CD8-positive, alpha-beta T cell (primary cell): ENCODE measurements at regions of chr6 and their contacts with region 1.

Region 1: DNA sequence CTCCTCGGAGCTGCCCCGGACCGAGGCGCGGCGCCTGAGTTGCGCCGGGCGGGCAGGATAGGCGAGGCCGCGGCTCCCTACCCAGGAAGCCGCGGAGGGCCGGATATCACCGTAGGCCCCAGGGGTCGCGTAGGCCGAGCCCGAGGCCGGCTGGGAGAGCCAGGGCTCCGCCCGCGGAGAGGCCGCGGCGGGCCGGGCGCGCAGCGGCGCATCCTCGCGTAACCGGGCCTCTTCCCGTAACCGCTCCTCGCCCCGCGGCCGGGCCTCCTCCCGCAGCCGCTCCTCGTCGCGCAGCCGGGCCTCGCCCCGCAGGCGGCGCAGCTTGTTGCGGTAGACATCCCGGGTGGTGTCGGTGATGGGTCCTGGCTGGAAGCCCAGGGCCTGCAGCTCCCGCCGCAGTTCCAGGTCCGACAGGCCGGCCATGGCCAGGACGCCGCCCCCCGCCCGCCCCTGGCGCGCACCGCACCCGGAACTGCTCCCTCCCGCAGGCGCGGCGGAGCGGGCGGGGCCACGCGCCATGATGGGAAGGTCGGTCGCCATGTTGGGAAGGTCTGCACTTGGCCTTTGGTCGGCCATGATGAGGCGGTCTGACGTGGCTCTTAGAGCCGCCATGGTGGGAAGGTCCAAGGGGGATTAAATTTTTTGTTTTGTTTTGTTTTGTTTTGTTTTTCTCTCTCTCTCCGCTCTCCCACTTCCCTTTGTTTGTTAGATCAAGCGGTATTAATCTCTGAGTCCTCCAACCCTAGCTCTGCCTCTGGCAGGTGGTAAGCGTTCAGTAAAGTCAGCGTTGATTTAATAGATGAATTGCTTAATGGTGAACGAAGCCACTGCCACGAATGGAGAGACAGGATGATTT is at the start of gene LEMD2:
- DNase-seq: peak; percentile 88 to 95 (median 93)
- ATAC-seq: peak; percentile 91
- H3K4me3 ChIP-seq: peak within 1 kb of the TSS; percentile 55 to 90
- H3K4me3 Mint-ChIP-seq: peak within 1 kb of the TSS; percentile 97
- H3K27ac ChIP-seq: peak within 1 kb of the TSS; percentile 87 to 90
- H3K27ac Mint-ChIP-seq: peak within 1 kb of the TSS; percentile 99
- H3K4me1 ChIP-seq: peaks cover 41% of the 10 kb centered on the region
- H3K4me1 Mint-ChIP-seq: peaks cover 51% of the 10 kb centered on the region
- H3K27me3 ChIP-seq: no peaks in the 10 kb centered on the region
- H3K27me3 Mint-ChIP-seq: peaks cover 5% of the 10 kb centered on the region
- CTCF ChIP-seq: no peak
- total RNA-seq, gene LEMD2: 124 TPM

Region 2: GRCh38 chr6:31971993-31972708 is 1816.8 kb before region 1 on chr6 and contains the start of gene DXO:
- CTCF ChIA-PET with region 1: no interaction called
- POLR2A ChIA-PET with region 1: no interaction called
- intact Hi-C with region 1: loop called in 1 of 2 experiments (anchors 10 kb)
- DNase-seq: peak; percentile 91 to 100 (median 97)
- ATAC-seq: peak; percentile 93
- H3K4me3 ChIP-seq: peak within 1 kb of the TSS; percentile 66 to 90
- H3K4me3 Mint-ChIP-seq: peak within 1 kb of the TSS; percentile 96
- H3K27ac ChIP-seq: peak within 1 kb of the TSS; percentile 98 to 99
- H3K27ac Mint-ChIP-seq: peak within 1 kb of the TSS; percentile 100
- H3K4me1 ChIP-seq: peaks cover 22% of the 10 kb centered on the region
- H3K4me1 Mint-ChIP-seq: peaks cover 37% of the 10 kb centered on the region
- H3K27me3 ChIP-seq: no peaks in the 10 kb centered on the region
- H3K27me3 Mint-ChIP-seq: no peaks in the 10 kb centered on the region
- CTCF ChIP-seq: no peak
- total RNA-seq, gene DXO: 20.8 to 22.2 TPM

Region 3: DNA sequence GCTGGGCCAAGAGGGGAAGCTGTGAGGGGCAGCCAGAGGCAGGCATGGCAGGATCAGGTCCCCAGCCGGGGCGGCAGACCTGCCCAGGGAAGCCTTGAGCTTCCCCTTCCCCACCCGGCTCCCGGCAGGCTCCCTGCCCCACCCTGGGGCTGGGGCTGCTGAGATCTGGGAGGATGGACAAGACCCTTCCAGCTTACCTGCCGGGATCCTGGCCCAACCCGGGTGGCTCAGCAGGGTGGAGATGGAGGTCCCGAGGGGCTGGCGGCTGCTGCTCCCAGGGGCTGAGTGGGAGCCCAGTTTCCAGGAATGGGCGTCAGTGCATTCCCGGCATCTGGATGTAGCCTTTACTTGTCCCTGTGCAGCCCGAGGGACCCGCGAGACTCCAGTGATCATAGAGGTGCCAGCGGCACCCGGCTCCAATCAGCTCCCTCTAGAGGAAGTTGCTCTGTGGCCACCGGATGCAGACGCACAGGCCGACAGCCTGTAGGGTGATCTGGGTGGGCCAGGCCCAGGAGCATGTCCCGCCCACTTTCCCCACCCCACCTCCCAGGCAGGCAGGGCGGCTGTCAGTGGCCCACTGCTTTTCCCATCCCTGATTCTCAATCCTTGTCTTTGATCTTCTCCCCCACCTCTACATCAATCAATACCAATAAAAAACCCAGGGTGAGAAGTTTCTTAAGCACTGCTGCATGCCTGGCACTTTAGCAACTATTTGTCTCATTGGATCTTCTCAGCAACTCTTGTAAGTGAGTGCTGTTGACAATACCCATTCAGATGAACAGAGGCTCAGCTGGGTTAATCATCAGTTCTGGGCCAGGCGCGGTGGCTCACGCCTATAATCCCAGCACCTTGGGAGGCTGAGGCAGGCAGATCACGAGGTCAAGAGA is 208.9 kb before region 1 on chr6 and contains the start of gene BAK1:
- CTCF ChIA-PET with region 1: no interaction called
- POLR2A ChIA-PET with region 1: no interaction called
- intact Hi-C with region 1: loop called in 1 of 2 experiments (anchors 2 kb)
- DNase-seq: peak; percentile 59 to 94 (median 85)
- ATAC-seq: peak; percentile 94
- H3K4me3 ChIP-seq: peak within 1 kb of the TSS; percentile 97 to 98
- H3K4me3 Mint-ChIP-seq: peak within 1 kb of the TSS; percentile 93
- H3K27ac ChIP-seq: peak within 1 kb of the TSS; percentile 85 to 87
- H3K27ac Mint-ChIP-seq: peak within 1 kb of the TSS; percentile 98
- H3K4me1 ChIP-seq: peaks cover 29% of the 10 kb centered on the region
- H3K4me1 Mint-ChIP-seq: peaks cover 31% of the 10 kb centered on the region
- H3K27me3 ChIP-seq: no peaks in the 10 kb centered on the region
- H3K27me3 Mint-ChIP-seq: no peaks in the 10 kb centered on the region
- CTCF ChIP-seq: peak; percentile 44
- total RNA-seq, gene BAK1: 44.8 to 46.5 TPM

Region 4: GRCh38 chr6:33732826-33733708 is 55.9 kb before region 1 on chr6:
- CTCF ChIA-PET with region 1: no interaction called
- POLR2A ChIA-PET with region 1: no interaction called
- intact Hi-C with region 1: no loop called
- DNase-seq: no peak
- ATAC-seq: no peak
- H3K4me3 ChIP-seq: no peak overlapping the region
- H3K4me3 Mint-ChIP-seq: no peak overlapping the region
- H3K27ac ChIP-seq: no peak overlapping the region
- H3K27ac Mint-ChIP-seq: no peak overlapping the region
- H3K4me1 ChIP-seq: no peaks in the 10 kb centered on the region
- H3K4me1 Mint-ChIP-seq: no peaks in the 10 kb centered on the region
- H3K27me3 ChIP-seq: no peaks in the 10 kb centered on the region
- H3K27me3 Mint-ChIP-seq: no peaks in the 10 kb centered on the region
- CTCF ChIP-seq: no peak

Region 5: DNA sequence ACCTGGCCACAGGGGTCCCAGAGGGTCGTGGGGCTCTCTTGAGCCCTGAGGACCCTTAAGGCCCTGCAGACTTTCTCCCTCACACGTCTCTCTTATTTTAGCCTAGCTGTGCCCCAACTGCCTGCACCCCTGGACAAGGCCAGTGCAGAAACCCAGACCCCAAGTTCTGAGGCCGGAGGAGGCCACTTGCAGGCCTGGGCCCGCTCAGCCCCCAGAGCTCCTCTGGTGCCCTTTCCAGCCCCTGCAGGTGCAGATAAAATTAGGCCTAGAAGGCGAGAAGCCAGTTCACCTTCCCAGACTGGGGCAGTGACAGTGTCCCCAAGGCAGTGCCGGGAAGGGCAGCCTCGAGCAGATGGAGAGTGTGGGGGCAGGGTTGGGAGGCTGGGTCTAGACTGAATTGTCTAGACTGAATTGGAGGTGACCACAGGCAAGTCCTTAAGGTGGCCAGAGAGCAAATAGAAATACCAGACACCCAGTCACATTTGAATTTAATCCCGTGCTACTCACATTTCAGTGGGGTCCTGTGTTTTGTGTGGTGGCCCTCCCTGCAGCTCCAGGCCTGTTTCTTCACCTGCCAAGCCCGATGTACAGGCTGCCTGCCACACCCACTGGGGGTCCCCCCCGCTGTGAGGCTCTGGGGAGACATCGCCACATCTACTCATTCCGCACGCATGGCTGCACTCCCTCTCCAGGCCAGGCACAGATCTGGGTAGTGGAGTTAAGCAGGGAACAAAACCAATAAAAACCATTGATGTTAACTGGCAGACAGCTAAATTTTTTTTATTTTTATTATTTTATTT is 33.7 kb before region 1 on chr6:
- CTCF ChIA-PET with region 1: no interaction called
- POLR2A ChIA-PET with region 1: no interaction called
- intact Hi-C with region 1: no loop called
- DNase-seq: no peak
- ATAC-seq: no peak
- H3K4me3 ChIP-seq: no peak overlapping the region
- H3K4me3 Mint-ChIP-seq: no peak overlapping the region
- H3K27ac ChIP-seq: no peak overlapping the region
- H3K27ac Mint-ChIP-seq: no peak overlapping the region
- H3K4me1 ChIP-seq: no peaks in the 10 kb centered on the region
- H3K4me1 Mint-ChIP-seq: no peaks in the 10 kb centered on the region
- H3K27me3 ChIP-seq: no peaks in the 10 kb centered on the region
- H3K27me3 Mint-ChIP-seq: no peaks in the 10 kb centered on the region
- CTCF ChIP-seq: no peak

Region 6: DNA sequence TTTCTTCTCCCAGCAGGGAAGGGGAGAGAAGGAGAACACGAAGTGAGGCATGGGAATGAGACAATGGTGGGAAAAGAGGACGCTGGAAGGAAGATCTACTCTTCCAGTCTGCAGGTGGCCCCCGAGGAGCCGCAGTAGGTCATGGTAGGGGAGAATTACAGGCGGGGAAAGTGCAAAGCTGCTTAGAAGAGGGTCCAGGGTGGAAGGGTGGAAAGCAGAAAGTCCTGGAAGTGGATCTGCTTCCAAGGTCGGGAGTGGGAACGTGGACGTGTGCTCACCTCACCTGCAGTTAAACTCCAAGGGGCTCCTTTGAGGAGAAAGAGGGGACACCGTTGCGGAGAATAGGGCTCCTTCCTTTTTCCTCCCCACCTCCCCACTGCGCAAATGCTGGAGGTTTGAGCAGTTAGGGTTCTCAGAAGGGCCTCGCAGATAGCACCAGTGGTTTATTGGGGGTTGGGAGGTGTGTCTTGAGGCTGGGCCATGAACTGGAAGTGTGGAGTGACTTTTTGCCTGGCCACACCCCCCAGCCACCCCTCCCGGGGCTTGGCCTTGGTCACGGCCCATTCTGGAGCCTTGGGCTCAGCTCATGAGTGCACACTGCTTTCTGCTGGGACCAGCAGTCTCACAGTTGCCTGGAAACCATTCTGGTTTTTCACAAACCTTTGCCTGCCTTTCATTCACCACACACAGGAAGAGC is 115.3 kb after region 1 on chr6:
- CTCF ChIA-PET with region 1: no interaction called
- POLR2A ChIA-PET with region 1: interaction called, 8 read pairs
- intact Hi-C with region 1: loop called (anchors 1 to 2 kb)
- DNase-seq: peak; percentile 42 to 94 (median 78)
- ATAC-seq: peak; percentile 78
- H3K4me3 ChIP-seq: peak overlapping the region; percentile 27 to 39
- H3K4me3 Mint-ChIP-seq: peak overlapping the region; percentile 64
- H3K27ac ChIP-seq: peak overlapping the region; percentile 71 to 76
- H3K27ac Mint-ChIP-seq: peak overlapping the region; percentile 93
- H3K4me1 ChIP-seq: peaks cover 59% of the 10 kb centered on the region
- H3K4me1 Mint-ChIP-seq: peaks cover 83% of the 10 kb centered on the region
- H3K27me3 ChIP-seq: no peaks in the 10 kb centered on the region
- H3K27me3 Mint-ChIP-seq: no peaks in the 10 kb centered on the region
- CTCF ChIP-seq: no peak

Region 7: DNA sequence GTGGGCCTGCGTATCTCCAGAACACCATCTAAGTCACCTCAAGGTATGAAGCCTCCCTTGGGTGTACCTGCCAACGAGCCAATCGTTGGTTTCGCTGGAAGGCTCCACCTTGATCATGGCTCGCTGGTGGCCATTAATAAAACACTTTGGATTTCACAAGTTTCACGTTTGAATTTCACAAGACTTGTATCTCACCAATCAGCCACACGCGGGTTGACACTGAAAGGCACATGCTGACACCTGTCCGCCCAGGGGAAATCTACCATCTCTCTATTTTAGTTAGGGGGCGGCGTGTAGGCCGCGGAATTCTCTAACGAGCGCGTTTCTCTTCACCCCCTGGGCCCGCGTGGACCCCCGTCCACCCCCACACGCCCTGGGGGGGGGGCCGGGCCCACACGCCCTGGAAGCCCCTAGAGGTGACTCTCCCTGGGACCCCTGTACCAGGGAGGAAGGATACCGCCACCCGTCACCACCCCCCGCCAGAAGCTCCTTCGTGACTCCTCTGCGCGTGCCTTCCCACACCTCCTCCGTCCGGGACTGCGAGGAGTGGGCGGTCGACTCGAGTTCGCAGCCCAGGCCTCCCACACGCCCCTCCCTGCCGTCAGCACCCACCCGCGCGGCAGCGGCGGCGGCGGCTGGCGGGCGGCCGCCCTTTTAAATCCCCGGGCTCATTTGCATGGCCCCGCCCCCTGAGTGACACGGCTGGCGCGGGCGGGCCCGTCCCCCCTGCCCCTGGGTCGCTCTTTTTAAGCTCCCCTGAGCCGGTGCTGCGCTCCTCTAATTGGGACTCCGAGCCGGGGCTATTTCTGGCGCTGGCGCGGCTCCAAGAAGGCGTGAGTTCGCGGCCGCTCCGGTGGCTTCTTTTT is 447.4 kb after region 1 on chr6 and contains the start of gene HMGA1:
- CTCF ChIA-PET with region 1: no interaction called
- POLR2A ChIA-PET with region 1: interaction called, 3 read pairs
- intact Hi-C with region 1: loop called (anchors 2 to 5 kb)
- DNase-seq: peak; percentile 75 to 95 (median 90)
- ATAC-seq: peak; percentile 70
- H3K4me3 ChIP-seq: peak within 1 kb of the TSS; percentile 77 to 90
- H3K4me3 Mint-ChIP-seq: peak within 1 kb of the TSS; percentile 90
- H3K27ac ChIP-seq: peak within 1 kb of the TSS; percentile 71 to 95
- H3K27ac Mint-ChIP-seq: peak within 1 kb of the TSS; percentile 99
- H3K4me1 ChIP-seq: peaks cover 22% of the 10 kb centered on the region
- H3K4me1 Mint-ChIP-seq: peaks cover 33% of the 10 kb centered on the region
- H3K27me3 ChIP-seq: no peaks in the 10 kb centered on the region
- H3K27me3 Mint-ChIP-seq: no peaks in the 10 kb centered on the region
- CTCF ChIP-seq: no peak
- total RNA-seq, gene HMGA1: 107 to 113 TPM

Region 8: DNA sequence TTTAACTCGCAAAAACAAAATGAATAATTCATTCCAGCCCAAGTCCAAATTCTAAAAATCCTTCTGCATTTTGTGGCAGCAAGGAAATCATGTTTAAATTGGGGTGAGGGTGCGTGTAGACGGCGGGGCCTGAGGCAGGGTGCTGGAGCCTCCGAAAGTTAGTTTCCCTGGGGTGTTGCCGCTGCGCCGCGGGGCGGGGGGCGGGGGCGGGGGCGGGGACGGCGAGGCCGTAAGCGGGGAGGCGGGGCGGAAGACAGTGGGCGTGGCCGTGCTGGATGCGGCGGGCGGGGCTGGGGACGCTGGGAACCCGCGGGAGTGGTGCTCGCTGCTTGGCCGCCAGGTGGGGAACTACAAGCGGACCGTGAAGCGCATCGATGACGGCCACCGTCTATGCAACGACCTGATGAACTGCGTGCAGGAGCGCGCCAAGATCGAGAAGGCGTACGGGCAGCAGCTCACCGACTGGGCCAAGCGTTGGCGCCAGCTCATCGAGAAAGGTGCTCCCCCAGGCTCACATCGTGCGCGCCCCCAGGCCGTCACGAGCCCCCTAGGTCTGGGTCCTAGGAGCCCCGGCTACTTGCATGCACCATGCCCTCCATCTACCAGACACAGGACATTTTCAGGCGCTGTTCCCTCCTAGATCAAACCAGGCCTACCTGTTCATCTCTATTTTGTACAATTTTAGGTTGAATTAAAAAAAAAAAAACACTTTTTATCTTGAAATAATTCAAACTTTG is 738.2 kb after region 1 on chr6:
- CTCF ChIA-PET with region 1: no interaction called
- POLR2A ChIA-PET with region 1: no interaction called
- intact Hi-C with region 1: loop called in 1 of 2 experiments (anchors 2 kb)
- DNase-seq: peak; percentile 91 to 99 (median 96)
- ATAC-seq: peak; percentile 98
- H3K4me3 ChIP-seq: peak overlapping the region; percentile 17 to 31
- H3K4me3 Mint-ChIP-seq: peak overlapping the region; percentile 58
- H3K27ac ChIP-seq: peak overlapping the region; percentile 31 to 58
- H3K27ac Mint-ChIP-seq: peak overlapping the region; percentile 80
- H3K4me1 ChIP-seq: peaks cover 7% of the 10 kb centered on the region
- H3K4me1 Mint-ChIP-seq: peaks cover 14% of the 10 kb centered on the region
- H3K27me3 ChIP-seq: no peaks in the 10 kb centered on the region
- H3K27me3 Mint-ChIP-seq: no peaks in the 10 kb centered on the region
- CTCF ChIP-seq: peak; percentile 51

Region 9: DNA sequence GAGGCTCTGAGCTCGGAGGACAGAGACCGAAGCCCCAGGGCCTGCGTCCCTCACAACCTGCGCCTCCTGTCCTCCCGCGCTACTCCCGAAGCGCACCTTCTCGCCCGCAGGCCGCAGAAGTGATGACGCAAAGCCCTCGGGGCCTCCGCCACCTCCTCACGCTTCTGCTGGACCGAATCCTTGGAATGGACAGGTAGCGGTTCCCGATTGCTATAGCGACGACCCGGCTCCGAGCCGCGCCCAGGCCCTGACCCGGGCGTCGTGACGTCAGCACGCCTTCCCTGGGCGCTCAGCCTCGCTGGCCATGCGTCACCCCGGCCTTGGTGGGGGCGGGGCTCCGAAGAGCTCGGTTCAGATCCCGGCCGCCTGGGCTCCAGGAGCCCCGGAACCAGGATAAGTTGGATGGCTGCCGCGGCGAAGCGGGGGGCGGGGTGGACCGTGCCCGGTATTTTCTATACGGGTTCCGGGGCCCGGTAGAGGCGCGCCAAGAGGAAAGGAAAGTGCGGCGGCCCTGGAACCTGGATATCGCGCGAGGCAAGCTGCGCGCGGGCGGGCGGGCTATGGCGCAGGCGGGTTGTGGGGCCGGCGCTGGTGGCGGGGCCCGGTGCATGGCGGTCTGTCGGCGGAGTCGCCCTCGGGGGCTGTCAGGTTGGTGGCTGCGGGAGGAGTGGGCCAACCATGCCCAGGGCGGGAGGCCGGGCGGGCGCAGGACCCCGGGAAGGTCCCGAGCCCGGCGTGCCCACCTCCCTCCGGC is 1470.4 kb after region 1 on chr6 and contains the start of gene ZNF76:
- CTCF ChIA-PET with region 1: no interaction called
- POLR2A ChIA-PET with region 1: no interaction called
- intact Hi-C with region 1: loop called in 1 of 2 experiments (anchors 10 kb)
- DNase-seq: peak; percentile 86 to 97 (median 93)
- ATAC-seq: peak; percentile 73
- H3K4me3 ChIP-seq: peak within 1 kb of the TSS; percentile 75 to 95
- H3K4me3 Mint-ChIP-seq: peak within 1 kb of the TSS; percentile 97
- H3K27ac ChIP-seq: peak within 1 kb of the TSS; percentile 88 to 96
- H3K27ac Mint-ChIP-seq: peak within 1 kb of the TSS; percentile 99
- H3K4me1 ChIP-seq: peaks cover 42% of the 10 kb centered on the region
- H3K4me1 Mint-ChIP-seq: peaks cover 55% of the 10 kb centered on the region
- H3K27me3 ChIP-seq: no peaks in the 10 kb centered on the region
- H3K27me3 Mint-ChIP-seq: no peaks in the 10 kb centered on the region
- CTCF ChIP-seq: no peak
- total RNA-seq, gene ZNF76: 54.6 to 57.8 TPM